ENCODE measurements at regions of chr14 and their contacts with region 1.

Region 1: DNA sequence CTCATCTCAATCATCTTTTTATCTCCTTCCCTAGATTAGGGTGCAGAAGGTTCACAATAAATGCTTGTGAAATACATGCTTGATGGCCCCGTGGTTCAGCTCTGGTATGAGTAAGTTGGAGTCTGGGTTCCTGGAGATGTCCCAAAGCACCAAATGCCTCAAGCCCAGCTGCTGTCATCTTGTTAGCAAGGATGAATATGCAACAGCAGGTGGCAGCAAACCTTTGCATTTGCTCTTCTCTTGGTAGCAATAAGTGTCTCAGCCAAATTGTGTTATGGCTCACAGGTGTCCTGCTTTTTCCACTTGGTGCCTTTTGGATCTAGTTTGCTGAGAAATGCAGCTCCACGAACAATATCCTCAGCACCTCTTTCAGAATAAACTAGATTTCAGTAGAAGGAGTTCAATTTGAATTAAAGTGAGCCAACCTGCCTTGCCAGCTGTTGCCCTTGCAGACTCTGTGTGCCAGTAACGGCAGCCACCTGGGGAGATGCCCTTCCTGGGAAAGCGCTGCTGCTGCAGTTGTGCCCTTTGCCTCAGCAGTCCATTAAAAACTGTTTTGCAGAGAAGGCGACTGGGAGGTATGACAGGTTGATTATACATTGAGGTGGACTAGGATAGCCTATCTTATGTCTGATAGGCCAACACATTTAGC is 417.3 kb downstream of the SNAPC1 start:
- DNase-seq: peak; percentile 92
- H3K4me3 ChIP-seq: no peak overlapping the region
- H3K27ac ChIP-seq: peak overlapping the region; percentile 2
- H3K4me1 ChIP-seq: peaks cover 29% of the 10 kb centered on the region
- H3K27me3 ChIP-seq: no peaks in the 10 kb centered on the region
- CTCF ChIP-seq: peak; percentile 79

Region 2: DNA sequence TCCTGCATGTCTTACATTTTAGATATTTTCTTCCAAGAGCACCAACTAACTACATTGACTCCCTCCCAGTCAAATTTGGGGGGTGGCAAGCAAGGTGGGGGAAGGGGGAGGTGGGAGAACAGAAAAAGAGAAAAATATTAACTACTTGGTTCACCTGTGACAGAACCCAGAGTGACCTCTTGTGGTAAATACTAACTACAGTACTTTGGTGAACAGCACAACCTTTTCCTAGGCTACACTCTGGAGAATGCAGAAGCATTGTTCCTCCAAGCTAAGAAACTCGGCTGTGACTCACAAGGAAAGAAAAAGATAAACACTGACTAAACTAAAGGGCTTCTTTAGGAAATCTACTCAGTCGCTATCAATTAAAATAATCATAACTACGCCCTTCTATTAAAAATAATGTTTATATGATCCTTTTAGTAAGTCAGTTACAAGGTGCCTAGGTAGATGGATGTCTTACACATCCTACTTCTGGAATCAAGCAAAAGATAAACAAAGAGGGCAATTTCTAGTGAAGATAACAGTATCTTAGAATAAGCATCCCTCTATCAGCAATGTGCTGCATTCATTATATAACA is 860.4 kb after region 1 on chr14:
- CTCF ChIA-PET with region 1: no interaction called
- POLR2A ChIA-PET with region 1: no interaction called
- intact Hi-C with region 1: loop called (anchors 2 kb)
- DNase-seq: peak; percentile 82
- H3K4me3 ChIP-seq: no peak overlapping the region
- H3K27ac ChIP-seq: peak overlapping the region; percentile 63
- H3K4me1 ChIP-seq: peaks cover 39% of the 10 kb centered on the region
- H3K27me3 ChIP-seq: no peaks in the 10 kb centered on the region
- CTCF ChIP-seq: peak; percentile 61

Region 3: GRCh38 chr14:63044994-63045611 is 865.6 kb after region 1 on chr14 and contains the start of gene KCNH5:
- CTCF ChIA-PET with region 1: interaction called, 16 read pairs
- POLR2A ChIA-PET with region 1: no interaction called
- intact Hi-C with region 1: no loop called
- DNase-seq: peak; percentile 88
- H3K4me3 ChIP-seq: peak within 1 kb of the TSS; percentile 80
- H3K27ac ChIP-seq: no peak within 1 kb of the TSS
- H3K4me1 ChIP-seq: peaks cover 28% of the 10 kb centered on the region
- H3K27me3 ChIP-seq: no peaks in the 10 kb centered on the region
- CTCF ChIP-seq: no peak
- total RNA-seq, gene KCNH5: 27.9 and 31.8 TPM in 2 replicates

Region 4: GRCh38 chr14:63134801-63135200 is 955.3 kb after region 1 on chr14:
- CTCF ChIA-PET with region 1: interaction called, 3 read pairs
- POLR2A ChIA-PET with region 1: no interaction called
- intact Hi-C with region 1: loop called (anchors 2 kb)
- DNase-seq: peak; percentile 79
- H3K4me3 ChIP-seq: no peak overlapping the region
- H3K27ac ChIP-seq: no peak overlapping the region
- H3K4me1 ChIP-seq: peaks cover 15% of the 10 kb centered on the region
- H3K27me3 ChIP-seq: no peaks in the 10 kb centered on the region
- CTCF ChIP-seq: peak; percentile 69

Measured in A673 (cell line).